Activated CD4-positive, alpha-beta T cell treated with anti-CD3 and anti-CD28 coated beads, Interleukin-2, amount 10 ng/mL, durations not matched to agents 24 days and 14 days (primary cell): ENCODE measurements at regions of chr2 and their contacts with region 1.

Region 1: DNA sequence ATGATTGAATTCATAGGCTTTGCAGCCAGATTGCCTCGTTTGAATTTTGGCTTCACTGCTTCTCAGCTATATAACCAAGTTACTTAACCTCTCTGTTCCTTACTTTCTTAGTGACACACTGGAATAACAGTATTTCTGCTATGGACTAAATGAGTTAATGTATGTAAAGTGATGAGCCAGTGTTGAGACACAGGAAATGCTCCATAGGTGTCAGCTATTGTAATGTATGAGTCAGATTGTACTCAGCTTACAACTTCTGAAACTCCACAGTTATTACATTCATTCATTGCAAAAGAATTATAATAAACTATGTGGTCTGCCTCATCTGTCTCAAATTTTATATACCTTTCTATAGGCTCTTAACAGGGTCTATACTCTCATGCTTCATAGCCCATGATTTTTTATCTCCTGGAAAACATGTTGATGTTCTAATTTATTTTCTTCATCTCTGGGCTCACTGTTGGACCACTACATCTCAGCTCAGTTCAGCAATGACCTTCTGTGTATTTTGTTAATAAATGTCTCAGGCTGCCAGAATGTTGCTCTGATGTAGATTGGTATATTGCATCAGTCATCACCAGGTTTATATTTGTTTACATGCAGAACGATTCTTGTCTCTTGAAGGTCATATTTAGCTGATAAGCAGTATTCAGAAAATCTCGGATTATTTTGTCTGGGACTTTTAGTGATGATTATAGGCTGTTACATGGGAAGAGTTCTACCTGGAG is 76.2 kb downstream of the MAP3K20 start:
- DNase-seq: no peak
- H3K4me3 Mint-ChIP-seq: no peak overlapping the region
- H3K27ac Mint-ChIP-seq: peak overlapping the region; percentile 80
- H3K4me1 Mint-ChIP-seq: peaks cover 45% of the 10 kb centered on the region
- H3K27me3 Mint-ChIP-seq: peaks cover under 1% of the 10 kb centered on the region

Region 2: GRCh38 chr2:172972005-172972619 is 179.7 kb before region 1 on chr2:
- intact Hi-C with region 1: loop called (anchors 5 kb)
- DNase-seq: peak; percentile 82
- H3K4me3 Mint-ChIP-seq: no peak overlapping the region
- H3K27ac Mint-ChIP-seq: no peak overlapping the region
- H3K4me1 Mint-ChIP-seq: peaks cover 11% of the 10 kb centered on the region
- H3K27me3 Mint-ChIP-seq: peaks cover 8% of the 10 kb centered on the region

Region 3: GRCh38 chr2:173048897-173049661 is 102.8 kb before region 1 on chr2:
- intact Hi-C with region 1: loop called (anchors 2 kb)
- DNase-seq: peak; percentile 60
- H3K4me3 Mint-ChIP-seq: no peak overlapping the region
- H3K27ac Mint-ChIP-seq: peak overlapping the region; percentile 12
- H3K4me1 Mint-ChIP-seq: peaks cover 10% of the 10 kb centered on the region
- H3K27me3 Mint-ChIP-seq: peaks cover 26% of the 10 kb centered on the region

Region 4: DNA sequence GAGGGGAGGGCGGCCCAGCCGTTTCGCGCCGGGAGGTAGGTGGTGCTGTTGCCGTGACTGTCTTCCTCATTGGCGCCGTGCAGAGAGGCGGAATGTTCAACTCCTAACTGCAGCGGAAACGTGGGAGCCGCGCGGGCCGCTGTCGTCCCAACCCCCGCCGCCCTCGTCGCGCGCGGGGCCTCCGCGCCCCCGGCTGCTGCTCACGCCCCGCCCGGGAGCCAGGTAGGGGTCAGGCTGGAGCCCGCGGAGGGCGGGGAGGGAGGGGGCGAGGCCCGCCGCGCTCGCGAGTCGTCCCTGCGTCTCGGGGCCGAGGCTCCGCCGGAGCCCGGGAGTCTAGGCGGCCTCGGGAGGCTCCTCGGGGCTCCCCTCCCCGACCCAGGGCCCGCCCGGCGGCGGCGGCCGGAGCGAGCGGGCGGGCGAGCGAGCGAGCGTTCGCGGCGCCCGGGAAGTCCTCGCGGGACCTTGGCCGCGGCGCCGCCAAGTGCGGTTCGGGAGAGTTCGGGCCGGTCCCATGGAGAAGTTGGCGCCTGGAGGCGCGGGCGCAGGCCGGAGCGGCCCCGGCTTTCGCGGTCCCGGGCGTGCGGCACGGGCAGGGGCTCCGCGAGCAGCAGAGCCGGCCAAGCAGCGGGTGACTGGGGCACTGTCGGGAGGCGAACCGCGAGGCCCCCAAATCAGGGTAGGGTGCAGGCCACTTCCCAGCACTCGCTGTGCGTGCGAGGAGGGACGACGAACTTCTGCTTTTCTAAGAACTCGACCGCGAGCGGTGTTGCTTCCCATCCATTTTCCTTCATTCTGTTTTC is 75.9 kb before region 1 on chr2 and contains the start of gene MAP3K20:
- intact Hi-C with region 1: loop called (anchors 1 kb)
- DNase-seq: peak; percentile 90
- H3K4me3 Mint-ChIP-seq: peak within 1 kb of the TSS; percentile 83
- H3K27ac Mint-ChIP-seq: peak within 1 kb of the TSS; percentile 79
- H3K4me1 Mint-ChIP-seq: peaks cover 22% of the 10 kb centered on the region
- H3K27me3 Mint-ChIP-seq: peaks cover 30% of the 10 kb centered on the region
- total RNA-seq, gene MAP3K20: 17.9 and 19.1 TPM in 2 replicates

Region 5: GRCh38 chr2:173101687-173102086 is 50.1 kb before region 1 on chr2:
- intact Hi-C with region 1: loop called (anchors 1 kb)
- DNase-seq: no peak
- H3K4me3 Mint-ChIP-seq: no peak overlapping the region
- H3K27ac Mint-ChIP-seq: peak overlapping the region; percentile 55
- H3K4me1 Mint-ChIP-seq: peaks cover 19% of the 10 kb centered on the region
- H3K27me3 Mint-ChIP-seq: no peaks in the 10 kb centered on the region

Region 6: DNA sequence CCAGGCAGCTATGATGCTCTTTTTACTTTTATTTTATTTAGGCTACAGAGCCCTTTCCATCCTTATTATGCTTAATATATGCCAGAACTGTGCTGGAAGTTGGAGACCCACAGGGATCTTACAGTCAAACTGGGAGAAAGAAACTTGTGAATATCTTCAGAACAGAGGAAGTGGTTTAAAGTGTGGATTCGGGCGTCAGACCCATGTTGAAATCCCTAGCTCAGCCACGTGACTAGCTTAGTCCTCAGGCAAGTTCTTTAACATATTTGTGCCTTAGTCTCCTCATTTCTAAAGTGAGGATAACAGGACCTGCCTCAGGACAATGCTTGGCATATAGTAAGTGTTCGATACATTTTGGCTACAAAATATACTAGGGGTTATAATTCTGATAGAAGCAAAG is 17.1 kb before region 1 on chr2:
- intact Hi-C with region 1: loop called (anchors 1 kb)
- DNase-seq: peak; percentile 64
- H3K4me3 Mint-ChIP-seq: peak overlapping the region; percentile 28
- H3K27ac Mint-ChIP-seq: peak overlapping the region; percentile 30
- H3K4me1 Mint-ChIP-seq: peaks cover 59% of the 10 kb centered on the region
- H3K27me3 Mint-ChIP-seq: peaks cover 15% of the 10 kb centered on the region

Region 7: GRCh38 chr2:173199294-173199693 is 47.5 kb after region 1 on chr2:
- intact Hi-C with region 1: no loop called
- DNase-seq: no peak
- H3K4me3 Mint-ChIP-seq: no peak overlapping the region
- H3K27ac Mint-ChIP-seq: no peak overlapping the region
- H3K4me1 Mint-ChIP-seq: no peaks in the 10 kb centered on the region
- H3K27me3 Mint-ChIP-seq: no peaks in the 10 kb centered on the region

Region 8: GRCh38 chr2:173286153-173286809 is 134.4 kb after region 1 on chr2:
- intact Hi-C with region 1: loop called (anchors 5 kb)
- DNase-seq: no peak
- H3K4me3 Mint-ChIP-seq: no peak overlapping the region
- H3K27ac Mint-ChIP-seq: no peak overlapping the region
- H3K4me1 Mint-ChIP-seq: peaks cover 2% of the 10 kb centered on the region
- H3K27me3 Mint-ChIP-seq: no peaks in the 10 kb centered on the region

Region 9: GRCh38 chr2:173374634-173375033 is 222.8 kb after region 1 on chr2:
- intact Hi-C with region 1: no loop called
- DNase-seq: no peak
- H3K4me3 Mint-ChIP-seq: no peak overlapping the region
- H3K27ac Mint-ChIP-seq: no peak overlapping the region
- H3K4me1 Mint-ChIP-seq: peaks cover 13% of the 10 kb centered on the region
- H3K27me3 Mint-ChIP-seq: no peaks in the 10 kb centered on the region

Region 10: DNA sequence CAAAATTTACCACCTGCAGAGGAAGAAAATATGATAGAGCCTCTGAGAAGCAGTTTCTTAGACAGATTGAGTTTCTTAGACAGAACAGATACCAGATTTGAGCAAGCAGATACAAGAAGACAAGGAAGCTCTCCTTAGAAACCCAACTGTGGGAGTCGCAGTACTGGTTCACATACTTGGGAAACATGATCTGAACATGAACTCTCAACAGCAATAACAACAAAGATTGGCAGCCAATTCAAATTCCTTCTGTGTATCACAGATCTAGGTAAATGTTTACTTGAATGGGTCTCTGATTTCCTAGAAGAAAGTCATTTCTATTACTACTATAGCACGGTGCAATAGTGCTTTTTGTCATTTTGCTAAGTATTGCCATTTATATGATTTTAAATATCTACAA is 1014.4 kb after region 1 on chr2:
- intact Hi-C with region 1: no loop called
- DNase-seq: no peak
- H3K4me3 Mint-ChIP-seq: no peak overlapping the region
- H3K27ac Mint-ChIP-seq: no peak overlapping the region
- H3K4me1 Mint-ChIP-seq: no peaks in the 10 kb centered on the region
- H3K27me3 Mint-ChIP-seq: no peaks in the 10 kb centered on the region